ENCODE measurements at regions of chr11 and their contacts with region 1.

Region 1: GRCh38 chr11:65791691-65792213 is 4.9 kb downstream of the OVOL1 start:
- DNase-seq: peak; percentile 52
- ATAC-seq: peak; percentile 93
- H3K4me3 Mint-ChIP-seq: no peak overlapping the region
- H3K27ac Mint-ChIP-seq: peak overlapping the region; percentile 80
- H3K4me1 Mint-ChIP-seq: peaks cover 40% of the 10 kb centered on the region
- H3K27me3 Mint-ChIP-seq: peaks cover 6% of the 10 kb centered on the region
- CTCF ChIP-seq: no peak

Region 2: DNA sequence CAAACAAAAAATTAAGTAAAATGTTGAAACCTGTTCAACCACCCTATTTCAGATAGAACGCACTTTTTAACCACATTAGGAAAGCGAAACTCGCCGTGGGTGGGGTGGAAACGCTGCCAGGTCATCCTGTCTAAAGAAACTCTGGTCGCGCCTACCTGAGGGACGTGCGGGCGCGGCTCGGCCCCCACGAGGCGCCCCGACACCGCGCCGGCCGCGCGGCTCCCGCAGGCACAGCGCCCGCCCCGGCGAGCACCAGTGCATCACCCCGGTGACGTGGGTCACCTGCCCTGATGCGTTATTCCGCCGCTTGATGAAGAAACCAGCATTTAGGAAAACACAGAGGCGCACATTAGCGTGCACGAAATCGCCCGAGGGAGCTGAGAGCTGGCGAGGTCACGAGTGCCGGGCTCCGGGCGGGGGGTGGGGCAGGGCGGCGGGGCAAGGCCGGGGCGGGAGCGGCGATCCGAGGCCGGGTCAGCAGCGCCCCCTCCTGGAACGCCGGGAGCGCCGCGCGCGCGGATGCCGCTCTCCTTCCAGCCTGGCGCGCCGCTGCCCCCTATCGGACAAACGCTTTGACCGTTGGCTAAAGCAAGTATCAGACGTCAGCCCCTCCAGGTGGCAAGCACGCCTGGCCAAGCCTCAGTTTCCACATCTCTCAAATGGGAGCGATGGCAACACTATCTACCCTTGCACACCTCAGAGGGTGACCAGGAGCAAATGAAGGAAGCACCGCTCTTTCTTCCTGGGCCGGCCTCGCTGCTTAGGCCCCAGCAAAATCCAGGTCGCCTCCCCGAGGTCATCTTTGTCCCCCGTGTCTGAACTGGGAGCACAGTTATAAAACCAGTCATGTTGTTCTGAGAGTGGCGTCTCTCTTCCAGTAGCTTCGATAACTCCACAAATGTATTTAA is 26.3 kb after region 1 on chr11:
- CTCF ChIA-PET with region 1: interaction called, 11 read pairs
- POLR2A ChIA-PET with region 1: interaction called, 6 read pairs
- intact Hi-C with region 1: loop called (anchors 1 kb)
- DNase-seq: peak; percentile 95
- ATAC-seq: peak; percentile 95
- H3K4me3 Mint-ChIP-seq: peak overlapping the region; percentile 77
- H3K27ac Mint-ChIP-seq: peak overlapping the region; percentile 63
- H3K4me1 Mint-ChIP-seq: peaks cover 14% of the 10 kb centered on the region
- H3K27me3 Mint-ChIP-seq: no peaks in the 10 kb centered on the region
- CTCF ChIP-seq: peak; percentile 96

Region 3: GRCh38 chr11:66207876-66208275 is 416.1 kb after region 1 on chr11:
- CTCF ChIA-PET with region 1: no interaction called
- POLR2A ChIA-PET with region 1: no interaction called
- intact Hi-C with region 1: no loop called
- DNase-seq: no peak
- ATAC-seq: no peak
- H3K4me3 Mint-ChIP-seq: no peak overlapping the region
- H3K27ac Mint-ChIP-seq: no peak overlapping the region
- H3K4me1 Mint-ChIP-seq: peaks cover 4% of the 10 kb centered on the region
- H3K27me3 Mint-ChIP-seq: no peaks in the 10 kb centered on the region
- CTCF ChIP-seq: no peak